ENCODE measurements at regions of chr12 and their contacts with region 1.

Region 1: DNA sequence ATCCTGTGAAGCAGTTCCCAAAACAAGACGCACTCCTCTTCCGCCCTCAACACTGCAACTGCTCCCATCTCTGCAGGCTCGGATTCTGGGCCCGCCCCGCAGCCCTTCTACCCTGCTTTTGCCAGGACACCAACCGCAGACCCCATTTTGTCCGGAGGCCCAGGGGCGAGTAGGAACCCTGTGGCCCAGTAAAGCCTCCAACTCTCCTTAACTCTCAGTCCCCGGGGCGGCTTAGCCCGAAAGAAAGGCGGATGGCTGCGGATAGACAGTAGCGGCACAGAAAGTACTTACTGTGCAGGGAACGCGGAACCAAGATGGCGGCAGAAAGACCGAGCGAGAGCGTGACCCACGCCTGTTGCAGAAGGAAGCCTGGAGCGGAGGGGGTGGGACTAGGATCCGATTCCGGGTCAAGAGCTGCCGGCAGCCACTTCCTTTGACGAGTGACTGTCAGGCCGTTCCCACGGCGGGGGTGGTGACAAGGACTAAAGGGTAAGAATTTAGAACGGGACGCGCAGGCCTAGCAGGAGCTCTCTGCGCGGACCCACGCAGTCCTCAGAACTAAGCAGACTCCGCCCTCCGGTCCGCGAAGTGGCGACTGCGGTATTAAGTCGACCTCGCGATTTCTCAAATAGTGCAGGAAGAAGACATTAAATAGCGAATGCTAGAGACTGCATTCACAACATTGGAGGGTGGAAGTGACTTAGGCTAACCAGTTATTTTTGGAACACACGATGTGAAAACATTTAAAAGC is at the start of gene NACA:
- DNase-seq: peak; percentile 96
- H3K4me3 ChIP-seq: peak within 1 kb of the TSS; percentile 92
- H3K27ac ChIP-seq: peak within 1 kb of the TSS; percentile 75 to 84
- H3K4me1 ChIP-seq: peaks cover 17% of the 10 kb centered on the region
- H3K27me3 ChIP-seq: no peaks in the 10 kb centered on the region
- CTCF ChIP-seq: peak in 1 of 3 donors; percentile 19
- EP300 ChIP-seq: peak; percentile 42
- POLR2A ChIP-seq: peak; percentile 98
- total RNA-seq, gene NACA: 1,240 to 2,316 (median 1,807) TPM

Region 2: DNA sequence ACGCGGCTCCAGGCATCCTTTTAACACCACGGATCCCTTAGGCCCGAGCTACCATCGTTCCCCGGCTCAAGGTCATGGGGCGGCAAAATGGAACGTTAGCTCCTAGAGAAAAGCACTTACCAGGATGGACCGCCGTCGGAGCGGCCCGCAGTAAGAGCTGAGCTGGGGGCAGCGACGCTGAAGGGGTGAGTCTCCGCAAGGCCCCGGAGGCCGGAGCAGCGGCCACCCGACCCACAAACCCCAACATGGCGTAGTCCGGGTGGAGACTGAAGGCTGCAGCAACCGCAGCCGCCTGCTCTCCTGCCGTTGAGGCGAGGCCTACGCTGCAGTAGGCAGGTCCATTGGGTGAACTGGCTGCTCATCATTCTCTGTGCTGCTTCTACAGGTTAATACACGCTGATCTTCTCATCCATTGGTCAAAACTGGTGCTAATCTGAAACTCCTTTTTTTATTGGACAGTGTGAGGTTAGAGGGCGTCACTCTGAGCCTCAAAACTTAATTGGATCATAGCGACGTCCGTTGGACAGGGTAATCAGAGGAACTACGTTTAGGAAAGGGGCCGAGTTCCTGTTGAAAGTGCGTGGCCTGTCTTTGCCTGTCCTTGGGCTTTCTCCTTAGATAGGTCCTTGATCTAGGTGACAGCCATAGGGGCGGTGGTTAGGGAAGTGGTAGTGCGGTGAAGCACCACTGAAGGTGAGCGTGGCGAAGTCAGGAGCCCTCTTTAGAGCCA is 79.3 kb before region 1 on chr12 and contains the start of gene ATP5F1B:
- intact Hi-C with region 1: loop called in 1 of 4 experiments (anchors 2 kb)
- DNase-seq: peak; percentile 92 to 97 (median 95)
- H3K4me3 ChIP-seq: peak within 1 kb of the TSS; percentile 97
- H3K27ac ChIP-seq: peak within 1 kb of the TSS; percentile 86 to 89
- H3K4me1 ChIP-seq: peaks cover 4% of the 10 kb centered on the region
- H3K27me3 ChIP-seq: no peaks in the 10 kb centered on the region
- CTCF ChIP-seq: no peak
- EP300 ChIP-seq: no peak
- POLR2A ChIP-seq: peak; percentile 89
- total RNA-seq, gene ATP5F1B: 201 to 334 (median 273) TPM

Region 3: DNA sequence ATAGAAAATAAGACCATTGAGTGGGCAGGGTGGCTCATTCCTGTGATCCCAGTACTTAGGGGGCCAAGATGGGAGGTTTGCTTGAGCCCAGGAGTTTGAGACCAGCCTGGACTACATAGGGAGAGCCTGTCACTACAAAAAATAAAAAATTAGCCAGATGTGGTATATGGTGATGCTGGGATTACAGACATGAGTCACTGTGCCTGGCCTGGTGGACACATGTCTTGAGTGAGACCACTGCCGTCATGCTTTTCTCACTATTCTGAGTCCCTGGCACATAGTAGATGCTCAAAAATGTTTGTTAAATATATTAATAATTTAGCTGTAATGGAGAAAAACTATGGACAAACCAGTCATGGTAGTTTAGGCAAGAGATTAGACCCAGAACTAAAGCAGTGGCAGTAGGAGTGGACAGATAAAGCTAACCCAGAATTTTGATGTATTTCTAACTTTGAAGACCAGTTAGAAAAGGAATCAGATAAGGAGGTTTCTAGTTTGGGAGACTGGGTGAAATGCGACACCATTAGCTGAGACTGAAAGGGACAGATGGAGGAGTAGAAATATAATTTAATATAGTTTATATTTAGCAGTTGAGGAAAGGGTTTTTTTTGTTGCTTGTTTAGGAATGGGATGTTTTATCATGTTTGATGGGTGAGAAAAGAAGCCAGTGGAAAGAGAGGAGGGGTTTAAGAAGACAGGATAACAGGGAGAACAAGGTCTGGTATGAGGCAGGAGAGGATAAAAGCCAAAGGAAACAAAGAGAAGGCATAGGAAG is 29.6 kb before region 1 on chr12:
- intact Hi-C with region 1: no loop called
- DNase-seq: peak in 1 of 5 donors; percentile 1
- H3K4me3 ChIP-seq: no peak overlapping the region
- H3K27ac ChIP-seq: no peak overlapping the region
- H3K4me1 ChIP-seq: no peaks in the 10 kb centered on the region
- H3K27me3 ChIP-seq: no peaks in the 10 kb centered on the region
- CTCF ChIP-seq: no peak
- EP300 ChIP-seq: no peak
- POLR2A ChIP-seq: no peak

Region 4: GRCh38 chr12:56766535-56766934 is 41.4 kb after region 1 on chr12:
- intact Hi-C with region 1: no loop called
- DNase-seq: no peak
- H3K4me3 ChIP-seq: no peak overlapping the region
- H3K27ac ChIP-seq: no peak overlapping the region
- H3K4me1 ChIP-seq: no peaks in the 10 kb centered on the region
- H3K27me3 ChIP-seq: no peaks in the 10 kb centered on the region
- CTCF ChIP-seq: no peak
- EP300 ChIP-seq: no peak
- POLR2A ChIP-seq: no peak

Measured in ovary (tissue), 10 donors.